ENCODE measurements at regions of chr14 and their contacts with region 1.

Region 1: GRCh38 chr14:95774265-95775160 is 60.6 kb upstream of the TCL1A start:
- DNase-seq: peak; percentile 45 to 79
- H3K4me3 ChIP-seq: no peak overlapping the region
- H3K4me1 ChIP-seq: no peaks in the 10 kb centered on the region
- H3K27me3 ChIP-seq: no peaks in the 10 kb centered on the region

Region 2: DNA sequence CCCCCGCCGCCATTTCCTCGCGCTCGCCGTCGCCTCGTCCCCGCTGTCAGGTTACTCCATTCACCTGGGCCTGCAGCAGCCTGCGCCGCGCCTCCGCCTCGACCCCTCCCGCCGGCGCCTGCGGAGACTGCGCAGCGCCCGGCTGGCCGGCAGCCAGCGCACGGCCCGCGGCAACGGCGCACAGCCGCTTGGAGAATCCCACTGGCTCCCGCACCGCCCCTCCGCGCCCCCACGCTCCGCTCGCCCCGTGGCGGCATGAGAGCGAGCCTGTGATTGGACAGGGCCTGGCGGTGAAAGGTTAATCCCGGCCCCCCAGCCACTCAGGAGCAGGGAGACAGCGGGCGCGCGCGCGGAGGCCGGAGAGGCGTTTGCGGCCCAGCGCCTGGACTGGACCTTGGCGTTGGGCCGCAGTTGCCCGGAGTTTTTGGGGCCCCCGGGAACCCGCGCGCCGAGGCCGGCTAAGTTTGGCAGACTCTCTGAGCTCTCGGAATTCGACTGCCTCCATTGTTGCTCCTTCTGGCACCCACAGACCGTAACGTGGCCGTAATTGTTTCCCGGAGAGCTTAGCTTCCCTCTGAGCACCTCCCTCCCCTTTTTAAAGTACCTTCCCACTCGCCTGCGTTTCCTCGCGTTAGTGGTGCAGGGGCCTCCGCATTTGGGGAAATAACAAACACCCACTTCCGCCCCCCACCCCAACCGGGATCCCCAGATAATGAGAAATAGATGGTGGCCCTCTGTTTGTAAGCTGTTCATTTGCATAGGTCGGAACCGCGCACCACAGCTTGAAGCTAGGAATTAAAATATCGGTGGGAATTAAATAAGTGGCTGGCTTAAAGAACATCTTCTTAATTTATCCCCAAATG is 617.0 kb before region 1 on chr14 and contains the start of gene DICER1:
- in situ Hi-C with region 1: no loop called
- DNase-seq: peak; percentile 80 to 97
- H3K4me3 ChIP-seq: peak within 1 kb of the TSS; percentile 66
- H3K4me1 ChIP-seq: peaks cover 8% of the 10 kb centered on the region
- H3K27me3 ChIP-seq: no peaks in the 10 kb centered on the region

Region 3: GRCh38 chr14:95417492-95417891 is 357.0 kb before region 1 on chr14:
- in situ Hi-C with region 1: no loop called
- DNase-seq: no peak
- H3K4me3 ChIP-seq: no peak overlapping the region
- H3K4me1 ChIP-seq: no peaks in the 10 kb centered on the region
- H3K27me3 ChIP-seq: no peaks in the 10 kb centered on the region

Region 4: DNA sequence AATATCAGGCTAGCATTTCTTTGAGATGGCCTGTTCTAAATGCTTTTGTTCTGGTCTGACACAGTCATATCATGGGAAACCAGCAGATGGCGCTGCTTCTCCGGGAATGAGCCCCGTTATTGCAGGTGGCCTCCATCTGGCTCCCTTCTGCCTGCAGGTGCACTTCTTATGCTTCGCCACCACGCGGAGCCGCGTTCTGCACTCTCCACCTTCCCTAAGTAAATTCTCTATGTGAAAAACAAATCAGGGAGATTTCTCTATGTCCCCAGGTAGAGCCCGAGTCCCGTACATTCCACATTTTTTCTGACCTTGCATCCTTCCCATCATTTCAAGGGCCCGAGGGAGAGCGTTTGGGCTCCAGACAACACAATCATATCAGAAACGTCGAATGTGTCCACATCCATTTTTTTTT is 213.5 kb before region 1 on chr14:
- in situ Hi-C with region 1: loop called (anchors 5 kb)
- DNase-seq: peak; percentile 90 to 95
- H3K4me3 ChIP-seq: no peak overlapping the region
- H3K4me1 ChIP-seq: peaks cover 7% of the 10 kb centered on the region
- H3K27me3 ChIP-seq: no peaks in the 10 kb centered on the region

Region 5: DNA sequence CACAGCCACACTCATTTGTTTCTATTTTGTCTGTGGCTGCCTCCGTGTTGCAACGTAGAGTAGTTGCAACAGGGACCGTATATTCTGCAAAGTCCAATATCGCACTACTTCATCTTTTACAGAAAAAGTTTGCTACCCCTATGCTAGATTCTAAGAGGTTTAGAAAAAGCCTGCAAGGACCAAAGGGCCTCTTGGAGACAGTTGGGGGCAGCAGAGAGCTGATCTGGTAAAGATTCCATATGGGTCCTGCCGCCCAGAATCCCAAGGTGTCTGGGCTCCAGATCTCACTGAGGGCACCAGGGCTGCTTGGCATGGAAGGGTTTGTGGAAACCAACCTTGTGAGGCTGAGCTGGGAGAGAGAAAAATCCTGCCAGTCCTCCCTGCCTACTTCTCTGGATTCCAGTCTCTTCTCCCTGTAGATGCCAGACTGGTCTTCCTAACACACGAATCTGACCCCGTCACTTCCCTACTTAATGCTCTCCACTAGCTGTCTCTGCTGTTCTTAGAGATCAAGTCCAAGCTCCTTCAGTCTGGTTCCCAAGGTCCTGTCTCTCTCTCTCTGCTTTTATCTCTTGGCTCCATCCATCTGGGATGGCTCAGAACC is 165.0 kb before region 1 on chr14:
- in situ Hi-C with region 1: loop called (anchors 5 kb)
- DNase-seq: peak; percentile 51 to 84
- H3K4me3 ChIP-seq: no peak overlapping the region
- H3K4me1 ChIP-seq: no peaks in the 10 kb centered on the region
- H3K27me3 ChIP-seq: no peaks in the 10 kb centered on the region; the same call in 1 of the 2 replicates

Measured in HAP-1 (cell line).